ENCODE measurements at regions of chr9 and their contacts with region 1.

Region 1: DNA sequence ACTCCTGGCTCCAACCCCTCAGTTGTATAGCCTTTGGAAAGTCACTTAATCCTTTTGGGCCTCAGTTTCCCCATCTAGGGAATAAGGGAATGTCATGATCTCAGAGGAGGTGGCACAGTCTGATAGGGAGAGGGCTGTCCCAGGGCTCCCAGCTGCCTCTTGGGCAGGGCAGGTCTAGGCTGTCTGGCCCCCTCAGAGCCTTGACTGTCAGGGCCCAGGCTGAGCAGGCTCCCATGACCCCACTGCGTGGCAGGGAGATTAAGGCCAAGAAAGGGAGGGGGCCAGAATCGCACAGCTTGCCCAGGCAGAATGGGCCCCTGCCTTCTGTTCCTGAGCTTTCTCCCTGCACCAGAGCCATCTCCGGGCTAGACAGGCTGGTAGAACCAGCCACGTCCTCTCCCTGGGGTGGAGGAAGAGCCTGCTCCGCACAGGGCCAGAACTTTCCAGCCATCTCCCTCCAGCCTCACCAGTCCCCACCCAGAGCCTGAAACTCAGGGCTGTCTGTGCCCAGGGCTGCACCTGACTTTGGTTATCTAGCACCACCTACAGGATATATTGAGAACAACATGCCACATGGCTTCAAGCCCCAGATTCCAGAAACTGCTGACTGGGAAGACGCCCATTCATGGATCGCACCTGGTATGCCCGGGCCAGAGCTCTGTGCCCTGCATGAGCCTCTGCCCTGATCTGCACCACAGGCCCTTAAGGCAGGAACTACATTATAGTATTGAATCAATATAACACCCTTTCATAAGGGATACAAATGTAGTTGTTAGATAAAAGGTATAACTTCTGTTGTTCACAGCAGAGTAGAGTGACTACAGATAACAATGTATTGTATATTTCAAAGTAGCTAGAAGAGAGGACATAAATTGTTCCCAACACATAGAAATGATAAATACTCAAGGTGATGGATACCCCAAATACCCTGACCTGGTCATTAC is 32.0 kb downstream of the NAIF1 start:
- DNase-seq: peak; percentile 76 to 85 (median 78)
- H3K4me3 ChIP-seq: no peak overlapping the region
- H3K27ac ChIP-seq: no peak overlapping the region
- H3K4me1 ChIP-seq: peaks cover 0 to 26% (median 10%) of the 10 kb centered on the region in 4 experiments
- H3K27me3 ChIP-seq: no peaks in the 10 kb centered on the region

Region 2: GRCh38 chr9:127937388-127938280 is 97.5 kb before region 1 on chr9 and contains the start of gene DPM2:
- CTCF ChIA-PET with region 1: interaction called, 245 read pairs
- POLR2A ChIA-PET with region 1: no interaction called
- DNase-seq: peak; percentile 89 to 95 (median 94)
- H3K4me3 ChIP-seq: peak within 1 kb of the TSS; percentile 55 to 92 (median 77)
- H3K27ac ChIP-seq: peak within 1 kb of the TSS in 1 of 2 experiments; percentile 76
- H3K4me1 ChIP-seq: peaks cover 5 to 29% (median 26%) of the 10 kb centered on the region in 4 experiments
- H3K27me3 ChIP-seq: no peaks in the 10 kb centered on the region

Region 3: DNA sequence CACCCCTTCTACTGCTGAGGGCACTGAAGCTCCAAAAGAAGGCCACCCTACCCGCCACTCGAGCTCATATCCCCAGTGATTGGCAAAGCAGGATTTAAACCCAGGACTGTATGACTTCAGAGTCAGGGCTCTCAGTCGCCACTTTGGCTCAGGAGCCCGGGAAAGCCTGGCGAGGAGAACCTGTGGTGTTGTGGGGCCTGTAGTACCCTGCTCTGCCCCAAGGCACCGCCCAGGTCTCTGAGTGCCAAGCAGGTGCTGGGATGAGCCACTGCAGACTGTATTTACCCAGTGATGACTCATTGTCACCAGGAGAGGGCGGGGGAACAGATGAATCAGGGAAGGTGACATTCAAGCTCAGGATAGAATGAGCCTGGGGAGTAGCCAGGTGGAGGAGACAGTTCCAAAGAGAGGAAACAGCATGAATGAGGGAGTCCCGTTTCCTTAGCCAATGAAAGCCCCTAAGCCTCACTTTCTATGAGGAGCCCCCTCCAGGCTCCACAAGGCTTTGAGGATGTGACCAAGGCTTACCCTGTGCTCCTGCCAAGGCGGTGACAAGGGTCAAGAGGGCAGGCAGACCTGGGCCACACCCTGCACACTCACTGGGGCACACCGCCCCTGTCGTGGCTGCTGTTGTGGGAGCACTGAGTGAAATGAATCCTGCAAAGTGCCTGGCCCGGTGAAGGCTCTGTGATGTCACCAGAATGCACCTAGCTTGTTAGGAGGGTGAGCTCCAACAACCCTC is 79.6 kb before region 1 on chr9:
- CTCF ChIA-PET with region 1: interaction called, 80 read pairs
- POLR2A ChIA-PET with region 1: no interaction called
- DNase-seq: peak; percentile 58 to 73 (median 70)
- H3K4me3 ChIP-seq: no peak overlapping the region
- H3K27ac ChIP-seq: no peak overlapping the region
- H3K4me1 ChIP-seq: peaks cover 0 to 9% (median 5%) of the 10 kb centered on the region in 4 experiments
- H3K27me3 ChIP-seq: no peaks in the 10 kb centered on the region

Region 4: DNA sequence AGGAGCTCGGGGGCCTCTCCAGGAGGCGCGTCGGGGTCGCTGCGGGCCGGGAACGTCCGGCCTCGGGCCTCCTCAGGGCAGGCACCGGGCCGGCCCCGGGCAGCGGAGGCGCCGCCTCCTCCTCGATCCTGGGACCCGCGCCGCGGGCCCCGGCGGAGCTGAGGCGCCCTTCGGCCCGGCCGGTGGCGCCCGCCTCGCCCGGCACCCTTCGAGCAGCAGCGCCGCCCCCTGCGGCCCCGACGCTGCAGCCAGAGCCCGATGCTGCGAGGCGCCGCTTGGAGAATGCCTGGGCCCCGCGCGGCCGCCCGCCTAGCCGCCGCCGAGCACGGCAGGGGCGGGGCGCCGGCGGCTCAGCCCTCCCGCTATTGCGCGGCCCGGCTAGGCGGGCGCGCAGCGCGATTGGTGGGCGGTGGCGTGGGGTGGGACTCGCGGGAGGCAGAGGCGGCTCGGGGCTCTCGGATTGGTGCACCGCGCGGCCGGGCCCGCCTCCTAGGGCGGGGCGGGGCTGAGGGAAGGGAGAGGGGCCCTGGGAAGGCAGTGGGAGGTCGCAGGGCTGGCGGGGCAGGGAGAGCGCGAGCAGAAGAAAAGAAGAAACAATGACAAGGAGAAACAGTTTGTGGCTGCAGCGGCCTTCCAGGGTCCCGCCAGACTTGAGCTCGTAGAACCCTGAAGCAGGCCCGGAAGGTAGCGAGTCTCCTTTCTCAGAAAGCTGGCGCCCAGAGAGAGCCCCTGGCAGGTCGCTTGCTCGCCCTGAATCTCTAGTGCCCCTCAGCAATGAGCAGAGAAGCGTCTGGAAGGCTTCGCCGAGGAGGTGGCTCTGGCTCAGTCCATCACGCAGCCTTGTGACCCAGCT is 54.2 kb before region 1 on chr9 and contains the start of gene EEIG1:
- CTCF ChIA-PET with region 1: interaction called, 12 read pairs
- POLR2A ChIA-PET with region 1: interaction called, 3 read pairs
- DNase-seq: peak; percentile 91 to 95 (median 95)
- H3K4me3 ChIP-seq: peak within 1 kb of the TSS; percentile 67 to 83 (median 77)
- H3K27ac ChIP-seq: peak within 1 kb of the TSS; percentile 50 to 80
- H3K4me1 ChIP-seq: peaks cover 0 to 50% (median 36%) of the 10 kb centered on the region in 4 experiments
- H3K27me3 ChIP-seq: no peaks in the 10 kb centered on the region

Region 5: GRCh38 chr9:128175102-128175563 is 140.0 kb after region 1 on chr9:
- CTCF ChIA-PET with region 1: no interaction called
- POLR2A ChIA-PET with region 1: no interaction called
- DNase-seq: no peak
- H3K4me3 ChIP-seq: no peak overlapping the region
- H3K27ac ChIP-seq: no peak overlapping the region
- H3K4me1 ChIP-seq: no peaks in the 10 kb centered on the region
- H3K27me3 ChIP-seq: no peaks in the 10 kb centered on the region

Region 6: GRCh38 chr9:128254855-128255759 is 220.0 kb after region 1 on chr9:
- CTCF ChIA-PET with region 1: no interaction called
- POLR2A ChIA-PET with region 1: no interaction called
- DNase-seq: peak; percentile 52 to 73 (median 66)
- H3K4me3 ChIP-seq: no peak overlapping the region
- H3K27ac ChIP-seq: no peak overlapping the region
- H3K4me1 ChIP-seq: peaks cover 0 to 16% (median 9%) of the 10 kb centered on the region in 4 experiments
- H3K27me3 ChIP-seq: no peaks in the 10 kb centered on the region